ENCODE measurements at regions of chr1 and their contacts with region 1.

Region 1: GRCh38 chr1:162161921-162162550 is 92.5 kb downstream of the NOS1AP start:
- DNase-seq: no peak
- H3K4me3 ChIP-seq: no peak overlapping the region
- H3K27ac ChIP-seq: no peak overlapping the region
- H3K4me1 ChIP-seq: peaks cover 10 to 22% (median 19%) of the 10 kb centered on the region in 4 donors
- H3K27me3 ChIP-seq: no peaks in the 10 kb centered on the region
- CTCF ChIP-seq: no peak
- EP300 ChIP-seq: no peak
- POLR2A ChIP-seq: no peak

Region 2: GRCh38 chr1:161298116-161298515 is 863.9 kb before region 1 on chr1:
- in situ Hi-C with region 1: no loop called
- intact Hi-C with region 1: no loop called
- DNase-seq: no peak
- H3K4me3 ChIP-seq: no peak overlapping the region
- H3K27ac ChIP-seq: no peak overlapping the region
- H3K4me1 ChIP-seq: no peaks in the 10 kb centered on the region
- H3K27me3 ChIP-seq: no peaks in the 10 kb centered on the region
- CTCF ChIP-seq: no peak
- EP300 ChIP-seq: no peak
- POLR2A ChIP-seq: no peak

Region 3: DNA sequence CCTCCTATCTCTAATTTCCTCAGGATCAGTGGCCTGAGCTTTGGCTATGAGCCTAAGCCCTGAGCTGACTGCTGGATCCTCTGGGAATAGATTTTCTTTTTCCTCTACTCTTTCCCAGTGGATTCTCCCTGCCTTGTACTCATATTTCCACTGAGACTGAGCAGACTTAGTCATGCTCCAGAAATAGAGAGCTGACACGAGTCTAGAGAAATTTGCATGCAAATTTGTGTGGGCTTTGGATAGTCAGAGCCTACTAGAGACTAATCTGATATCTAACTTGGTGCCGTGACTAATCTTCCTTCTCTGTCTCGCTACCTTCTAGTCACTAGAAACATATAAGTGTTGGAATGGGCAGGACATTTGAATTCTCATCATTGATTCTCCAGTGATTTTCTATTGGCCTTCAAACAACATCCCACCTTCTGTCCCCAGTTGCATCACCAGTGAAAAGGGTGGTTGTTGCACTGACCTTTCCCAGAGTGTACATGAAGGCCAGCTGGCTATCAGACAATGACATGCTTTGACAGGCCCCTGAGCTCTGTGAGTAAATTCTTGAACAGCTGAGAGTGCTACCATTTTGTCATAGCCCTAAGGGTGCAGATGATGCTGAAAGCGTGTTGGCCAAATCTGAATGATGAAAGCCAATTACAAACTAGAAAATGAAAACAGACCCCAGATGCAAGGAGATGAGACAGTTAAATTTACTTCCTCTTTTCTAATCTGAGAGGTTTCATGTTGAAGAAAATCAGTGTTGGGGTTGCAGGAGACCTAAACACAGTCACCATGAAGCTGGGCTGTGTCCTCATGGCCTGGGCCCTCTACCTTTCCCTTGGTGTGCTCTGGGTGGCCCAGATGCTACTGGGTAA is 455.3 kb before region 1 on chr1 and contains the start of gene FCRLA:
- in situ Hi-C with region 1: no loop called
- intact Hi-C with region 1: no loop called
- DNase-seq: no peak
- H3K4me3 ChIP-seq: no peak within 1 kb of the TSS
- H3K27ac ChIP-seq: no peak within 1 kb of the TSS
- H3K4me1 ChIP-seq: no peaks in the 10 kb centered on the region
- H3K27me3 ChIP-seq: no peaks in the 10 kb centered on the region
- CTCF ChIP-seq: no peak
- EP300 ChIP-seq: no peak
- POLR2A ChIP-seq: no peak
- total RNA-seq, gene FCRLA: 0.41 to 13.1 (median 7.0) TPM in 3 of 4 donors, not detected in the other

Region 4: DNA sequence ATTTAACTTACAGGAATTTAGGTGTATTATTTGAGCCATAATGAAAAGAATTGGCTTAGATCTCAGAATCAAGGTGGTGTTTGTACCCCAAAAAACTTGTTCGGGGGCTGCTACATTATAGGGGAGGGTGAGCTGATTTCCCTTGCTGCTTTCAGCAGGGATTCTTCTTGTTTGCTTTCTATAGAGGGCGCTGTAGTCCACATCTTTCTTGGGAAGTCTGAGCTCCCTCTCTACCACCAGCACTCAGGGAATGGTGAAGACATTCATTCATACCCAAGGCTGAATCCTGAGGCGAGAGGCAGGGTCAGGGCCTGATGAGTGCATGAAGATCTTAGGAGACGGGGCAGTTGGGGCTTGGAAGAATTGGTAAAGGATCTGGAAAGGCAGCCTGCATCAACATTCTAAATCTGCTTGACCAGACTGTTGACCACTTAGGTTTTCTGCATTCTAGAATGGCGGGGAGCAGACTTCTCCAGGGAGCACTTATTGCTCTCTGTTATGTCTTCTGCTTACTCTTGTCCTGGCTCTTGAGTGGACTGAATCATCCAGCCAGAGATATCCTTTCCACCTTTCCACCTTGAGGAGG is 195.7 kb after region 1 on chr1:
- in situ Hi-C with region 1: no loop called
- intact Hi-C with region 1: no loop called
- DNase-seq: no peak
- H3K4me3 ChIP-seq: no peak overlapping the region
- H3K27ac ChIP-seq: no peak overlapping the region
- H3K4me1 ChIP-seq: peaks cover 0 to 7% (median 0%) of the 10 kb centered on the region in 4 donors
- H3K27me3 ChIP-seq: no peaks in the 10 kb centered on the region
- CTCF ChIP-seq: peak; percentile 41 to 64 (median 51)
- EP300 ChIP-seq: no peak
- POLR2A ChIP-seq: no peak

Region 5: GRCh38 chr1:162927421-162927820 is 765.4 kb after region 1 on chr1:
- in situ Hi-C with region 1: no loop called
- intact Hi-C with region 1: loop called (anchors 5 kb)
- DNase-seq: no peak
- H3K4me3 ChIP-seq: no peak overlapping the region
- H3K27ac ChIP-seq: no peak overlapping the region
- H3K4me1 ChIP-seq: no peaks in the 10 kb centered on the region
- H3K27me3 ChIP-seq: no peaks in the 10 kb centered on the region
- CTCF ChIP-seq: no peak
- EP300 ChIP-seq: no peak
- POLR2A ChIP-seq: no peak

Measured in transverse colon (tissue), 4 donors.